ENCODE measurements at regions of chr21 and their contacts with region 1.

Region 1: GRCh38 chr21:37267269-37268184 is at the start of gene VPS26C:
- DNase-seq: peak; percentile 99
- H3K4me3 Mint-ChIP-seq: peak within 1 kb of the TSS; percentile 94
- H3K27ac Mint-ChIP-seq: peak within 1 kb of the TSS; percentile 96
- H3K4me1 Mint-ChIP-seq: peaks cover 38% of the 10 kb centered on the region
- H3K27me3 Mint-ChIP-seq: no peaks in the 10 kb centered on the region
- total RNA-seq, gene VPS26C: 50.1 to 51.0 TPM

Region 2: GRCh38 chr21:36385233-36386030 is 882.1 kb before region 1 on chr21 and contains the start of gene CHAF1B:
- CTCF ChIA-PET with region 1: no interaction called
- intact Hi-C with region 1: loop called (anchors 5 kb)
- DNase-seq: peak; percentile 82
- H3K4me3 Mint-ChIP-seq: peak within 1 kb of the TSS; percentile 80
- H3K27ac Mint-ChIP-seq: peak within 1 kb of the TSS; percentile 46
- H3K4me1 Mint-ChIP-seq: peaks cover 20% of the 10 kb centered on the region
- H3K27me3 Mint-ChIP-seq: no peaks in the 10 kb centered on the region
- total RNA-seq, gene CHAF1B: 30.5 to 31.9 TPM

Region 3: DNA sequence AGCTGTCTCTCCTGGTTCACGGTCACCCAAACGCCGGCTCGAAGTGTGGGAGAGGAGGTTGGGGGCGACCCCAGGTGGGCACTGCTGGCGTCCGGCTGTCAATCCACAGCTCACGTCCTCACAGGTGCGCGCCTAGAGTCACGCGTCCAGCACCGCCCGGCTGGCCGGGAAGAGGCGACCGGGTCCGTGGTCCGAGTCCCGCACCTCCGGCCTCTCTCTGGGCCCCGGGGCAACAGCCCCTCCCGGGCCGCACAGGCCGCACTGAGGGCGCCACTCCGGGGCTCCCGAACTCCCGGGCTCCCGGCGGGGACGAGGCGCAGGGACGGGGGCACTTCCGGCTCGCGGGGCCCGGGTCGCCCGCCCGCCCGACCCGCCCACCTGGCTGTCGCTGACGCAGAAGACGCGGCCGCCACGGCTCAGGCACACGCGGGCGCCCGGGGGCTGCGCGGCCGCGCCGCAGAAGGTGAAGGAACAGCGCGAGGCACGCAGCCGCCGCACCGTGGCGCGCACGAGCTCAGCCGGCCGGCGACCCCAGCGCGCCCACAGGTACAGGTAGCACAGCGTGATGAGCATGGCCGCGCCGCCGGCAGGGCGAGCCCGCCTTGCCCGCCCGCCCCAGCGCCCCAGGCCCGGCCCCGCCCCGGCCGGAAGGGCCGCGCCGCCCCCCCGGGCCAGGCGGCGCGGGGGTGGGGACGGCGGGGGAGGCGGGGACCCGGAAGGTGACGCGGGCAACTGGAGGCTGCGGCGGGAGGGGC is 301.3 kb before region 1 on chr21 and contains the start of gene HLCS:
- CTCF ChIA-PET with region 1: no interaction called
- intact Hi-C with region 1: loop called (anchors 5 kb)
- DNase-seq: peak; percentile 72
- H3K4me3 Mint-ChIP-seq: peak within 1 kb of the TSS; percentile 78
- H3K27ac Mint-ChIP-seq: peak within 1 kb of the TSS; percentile 86
- H3K4me1 Mint-ChIP-seq: peaks cover 12% of the 10 kb centered on the region
- H3K27me3 Mint-ChIP-seq: no peaks in the 10 kb centered on the region
- total RNA-seq, gene HLCS: 12.5 to 12.6 TPM

Region 4: GRCh38 chr21:36989699-36990507 is 277.6 kb before region 1 on chr21:
- CTCF ChIA-PET with region 1: no interaction called
- intact Hi-C with region 1: loop called (anchors 5 kb)
- DNase-seq: peak; percentile 89
- H3K4me3 Mint-ChIP-seq: peak overlapping the region; percentile 80
- H3K27ac Mint-ChIP-seq: peak overlapping the region; percentile 65
- H3K4me1 Mint-ChIP-seq: peaks cover 38% of the 10 kb centered on the region
- H3K27me3 Mint-ChIP-seq: no peaks in the 10 kb centered on the region

Region 5: GRCh38 chr21:37281993-37282392 is 14.5 kb after region 1 on chr21:
- CTCF ChIA-PET with region 1: no interaction called
- intact Hi-C with region 1: no loop called
- DNase-seq: peak; percentile 24
- H3K4me3 Mint-ChIP-seq: peak overlapping the region; percentile 70
- H3K27ac Mint-ChIP-seq: peak overlapping the region; percentile 76
- H3K4me1 Mint-ChIP-seq: peaks cover 4% of the 10 kb centered on the region
- H3K27me3 Mint-ChIP-seq: no peaks in the 10 kb centered on the region

Region 6: GRCh38 chr21:37463083-37463801 is 195.7 kb after region 1 on chr21:
- CTCF ChIA-PET with region 1: no interaction called
- intact Hi-C with region 1: loop called (anchors 1 kb)
- DNase-seq: peak; percentile 35
- H3K4me3 Mint-ChIP-seq: no peak overlapping the region
- H3K27ac Mint-ChIP-seq: peak overlapping the region; percentile 46
- H3K4me1 Mint-ChIP-seq: peaks cover 71% of the 10 kb centered on the region
- H3K27me3 Mint-ChIP-seq: no peaks in the 10 kb centered on the region

Region 7: GRCh38 chr21:37503848-37504467 is 236.4 kb after region 1 on chr21:
- CTCF ChIA-PET with region 1: no interaction called
- intact Hi-C with region 1: loop called (anchors 5 kb)
- DNase-seq: peak; percentile 50
- H3K4me3 Mint-ChIP-seq: peak overlapping the region; percentile 5
- H3K27ac Mint-ChIP-seq: peak overlapping the region; percentile 88
- H3K4me1 Mint-ChIP-seq: peaks cover 26% of the 10 kb centered on the region
- H3K27me3 Mint-ChIP-seq: no peaks in the 10 kb centered on the region

Region 8: DNA sequence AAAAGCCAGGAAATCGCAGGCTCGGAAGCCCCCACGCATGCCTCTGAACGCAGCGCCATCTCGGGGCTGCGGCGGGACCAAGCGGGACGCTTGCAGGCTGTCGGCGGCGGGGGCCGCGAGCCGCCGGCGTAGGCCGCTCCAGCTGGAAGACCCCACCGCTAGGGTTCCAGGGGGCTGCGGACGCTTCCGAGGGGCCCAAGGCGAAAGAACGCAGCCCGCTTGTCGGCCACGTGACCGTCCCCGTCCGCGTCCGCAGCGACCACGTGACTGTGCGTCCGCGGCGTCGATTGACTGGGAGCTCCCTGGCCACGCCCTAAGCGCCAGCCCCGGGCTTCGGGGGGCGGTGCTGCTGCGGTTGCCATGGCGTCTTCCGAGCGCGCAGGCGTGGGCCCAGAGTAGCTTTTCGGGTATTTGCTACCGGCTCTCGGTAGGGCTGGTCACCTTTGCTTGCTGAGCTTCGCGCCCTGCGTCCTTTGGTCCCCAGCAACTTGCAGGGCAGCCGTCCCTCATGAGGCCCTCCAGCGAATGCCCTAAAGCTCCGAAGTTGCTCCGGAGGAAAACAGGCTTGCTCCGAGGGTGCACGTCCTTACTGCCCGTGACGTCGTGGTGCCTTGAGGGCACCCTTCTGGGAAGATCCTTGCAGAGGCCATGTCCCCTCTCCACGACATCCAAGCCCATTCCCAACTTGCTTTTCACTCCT is 296.3 kb after region 1 on chr21:
- CTCF ChIA-PET with region 1: interaction called, 3 read pairs
- intact Hi-C with region 1: loop called (anchors 1 kb)
- DNase-seq: peak; percentile 92
- H3K4me3 Mint-ChIP-seq: peak overlapping the region; percentile 88
- H3K27ac Mint-ChIP-seq: peak overlapping the region; percentile 99
- H3K4me1 Mint-ChIP-seq: peaks cover 20% of the 10 kb centered on the region
- H3K27me3 Mint-ChIP-seq: no peaks in the 10 kb centered on the region